Caco-2 (cell line): ENCODE measurements at regions of chr11 and their contacts with region 1.

Region 1: DNA sequence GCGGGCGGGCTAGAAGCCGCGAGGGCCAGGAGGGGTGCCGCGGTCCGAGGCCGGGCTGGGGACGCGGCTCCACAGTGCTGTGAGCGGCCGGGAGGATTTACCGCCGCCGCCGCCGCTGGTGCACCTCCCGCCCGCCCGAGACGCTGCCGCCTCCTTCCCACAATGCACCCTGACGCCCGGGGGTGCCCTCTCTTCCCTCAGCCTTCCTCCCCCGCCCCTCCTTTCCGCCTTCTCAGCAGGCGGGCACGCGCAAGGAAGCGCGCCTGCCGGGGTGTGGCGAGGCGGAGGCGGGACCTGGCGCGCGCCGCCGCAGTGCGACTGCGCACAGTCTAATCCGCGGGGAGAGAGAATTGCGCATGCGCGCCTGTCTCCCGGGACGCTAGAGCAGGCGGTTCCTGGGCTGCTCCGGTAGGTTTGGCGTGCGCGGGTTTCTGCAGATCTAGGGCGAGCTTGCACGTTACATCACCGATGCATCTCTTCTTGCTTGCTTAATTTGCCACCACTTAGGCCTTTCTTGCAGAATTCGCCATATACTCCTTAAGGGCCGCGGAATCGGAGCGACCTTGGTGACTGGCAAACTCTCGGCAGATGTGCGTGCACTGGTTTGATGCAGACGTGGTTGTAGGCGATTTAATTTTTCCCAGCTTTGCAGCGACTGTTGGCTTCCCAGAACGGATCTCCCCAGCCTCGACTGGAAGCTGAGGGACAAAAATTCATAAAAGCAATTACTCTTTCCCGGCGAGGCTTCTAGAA is at the starts of genes GVQW3 and THAP12:
- DNase-seq: peak; percentile 100
- H3K4me3 ChIP-seq: peak within 1 kb of the TSS; percentile 75
- H3K4me3 Mint-ChIP-seq: peak within 1 kb of the TSS; percentile 92
- H3K27ac Mint-ChIP-seq: peak within 1 kb of the TSS; percentile 68
- H3K4me1 ChIP-seq: peaks cover 28% of the 10 kb centered on the region
- H3K4me1 Mint-ChIP-seq: peaks cover 41% of the 10 kb centered on the region
- H3K27me3 ChIP-seq: no peaks in the 10 kb centered on the region
- H3K27me3 Mint-ChIP-seq: no peaks in the 10 kb centered on the region
- CTCF ChIP-seq: peak in 1 of 2 experiments; percentile 27
- total RNA-seq, gene GVQW3: 13.0 and 15.8 TPM in 2 replicates
- total RNA-seq, gene THAP12: 99.9 and 102 TPM in 2 replicates

Region 2: DNA sequence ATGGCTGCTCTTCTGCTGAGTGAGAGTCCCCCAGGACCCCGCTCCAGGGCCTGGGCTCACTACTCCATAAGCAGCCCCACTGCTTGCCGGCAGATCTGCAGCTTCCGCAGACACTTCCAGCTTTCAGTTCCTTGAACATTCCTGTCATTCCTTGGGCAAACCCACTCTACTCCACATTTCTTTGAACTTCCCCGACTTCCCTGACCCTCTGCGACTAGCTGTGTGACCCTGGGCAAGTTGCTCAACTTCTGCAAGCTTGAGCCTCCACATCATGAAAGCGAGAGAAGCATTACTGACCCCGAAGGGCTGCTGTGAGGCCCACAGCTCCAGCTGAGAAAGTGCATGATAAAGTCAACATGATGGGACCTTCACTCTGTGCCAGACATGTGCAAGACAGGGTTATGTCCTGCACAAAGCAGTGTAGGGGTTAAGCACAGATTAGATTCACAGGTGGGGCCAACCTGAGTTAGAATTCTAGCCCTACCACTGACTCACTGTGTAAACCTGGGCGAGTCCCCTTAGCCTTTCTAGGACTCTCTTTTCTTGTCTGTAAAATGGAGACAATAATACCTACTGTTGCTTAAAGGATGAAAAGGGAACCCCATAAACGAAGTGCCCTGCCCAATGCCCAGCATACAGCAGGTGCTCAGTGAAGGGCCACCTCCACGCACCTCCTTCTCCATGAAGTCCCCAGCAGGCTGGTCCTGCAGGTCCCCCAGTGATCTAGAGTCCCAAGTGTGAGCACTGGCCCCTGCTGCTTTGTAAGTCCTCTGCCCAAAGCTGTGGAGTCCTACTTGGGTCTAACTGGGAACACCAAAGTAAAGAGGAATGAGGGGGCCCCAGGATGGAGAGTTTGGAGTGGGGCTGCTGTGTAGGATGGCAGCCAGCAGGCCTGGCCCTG is 51.8 kb before region 1 on chr11:
- CTCF ChIA-PET with region 1: interaction called, 5 read pairs
- POLR2A ChIA-PET with region 1: no interaction called
- intact Hi-C with region 1: loop called (anchors 1 kb)
- DNase-seq: peak; percentile 97 to 99
- H3K4me3 ChIP-seq: no peak overlapping the region
- H3K4me3 Mint-ChIP-seq: peak overlapping the region; percentile 51
- H3K27ac Mint-ChIP-seq: peak overlapping the region; percentile 84
- H3K4me1 ChIP-seq: peaks cover 39% of the 10 kb centered on the region
- H3K4me1 Mint-ChIP-seq: peaks cover 38% of the 10 kb centered on the region
- H3K27me3 ChIP-seq: no peaks in the 10 kb centered on the region
- H3K27me3 Mint-ChIP-seq: no peaks in the 10 kb centered on the region
- CTCF ChIP-seq: no peak

Region 3: DNA sequence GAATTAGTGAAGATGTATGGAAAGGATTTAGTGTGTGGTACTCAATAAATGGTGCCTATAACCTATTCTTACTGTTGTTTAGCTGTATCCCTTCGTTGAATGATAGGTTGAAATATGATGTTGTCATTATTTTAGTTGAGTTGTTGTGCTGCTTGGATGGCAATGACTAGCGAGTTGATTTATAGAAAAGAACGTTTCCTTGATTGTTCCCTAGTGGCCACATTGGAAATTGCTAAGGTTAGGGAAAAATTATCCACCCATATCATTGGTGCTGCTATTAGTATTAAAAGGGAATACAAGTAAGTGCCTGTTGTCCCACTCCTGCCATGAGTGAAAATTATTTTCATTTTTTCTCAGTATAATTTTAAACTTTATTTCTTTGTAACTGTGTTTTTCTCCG is 78.2 kb after region 1 on chr11:
- CTCF ChIA-PET with region 1: no interaction called
- POLR2A ChIA-PET with region 1: no interaction called
- intact Hi-C with region 1: loop called (anchors 1 kb)
- DNase-seq: no peak
- H3K4me3 ChIP-seq: no peak overlapping the region
- H3K4me3 Mint-ChIP-seq: no peak overlapping the region
- H3K27ac Mint-ChIP-seq: no peak overlapping the region
- H3K4me1 ChIP-seq: peaks cover 31% of the 10 kb centered on the region
- H3K4me1 Mint-ChIP-seq: peaks cover 25% of the 10 kb centered on the region
- H3K27me3 ChIP-seq: no peaks in the 10 kb centered on the region
- H3K27me3 Mint-ChIP-seq: no peaks in the 10 kb centered on the region
- CTCF ChIP-seq: peak; percentile 62 to 74

Region 4: GRCh38 chr11:76524919-76525318 is 143.8 kb after region 1 on chr11:
- CTCF ChIA-PET with region 1: no interaction called
- POLR2A ChIA-PET with region 1: no interaction called
- intact Hi-C with region 1: loop called (anchors 2 kb)
- DNase-seq: no peak
- H3K4me3 ChIP-seq: no peak overlapping the region
- H3K4me3 Mint-ChIP-seq: no peak overlapping the region
- H3K27ac Mint-ChIP-seq: no peak overlapping the region
- H3K4me1 ChIP-seq: peaks cover 47% of the 10 kb centered on the region
- H3K4me1 Mint-ChIP-seq: peaks cover 50% of the 10 kb centered on the region
- H3K27me3 ChIP-seq: no peaks in the 10 kb centered on the region
- H3K27me3 Mint-ChIP-seq: no peaks in the 10 kb centered on the region
- CTCF ChIP-seq: no peak